Endothelial cell of umbilical vein (primary cell): ENCODE measurements at regions of chr1 and their contacts with region 1.

Region 1: GRCh38 chr1:29513357-29513756 is 277.0 kb downstream of the PTPRU start:
- DNase-seq: peak; percentile 45
- H3K4me3 ChIP-seq: no peak overlapping the region
- H3K27ac ChIP-seq: no peak overlapping the region
- H3K4me1 ChIP-seq: no peaks in the 10 kb centered on the region
- H3K27me3 ChIP-seq: no peaks in the 10 kb centered on the region
- CTCF ChIP-seq: peak; percentile 50 to 51
- POLR2A ChIP-seq: no peak

Region 2: GRCh38 chr1:29436181-29436785 is 77.1 kb before region 1 on chr1:
- CTCF ChIA-PET with region 1: no interaction called
- POLR2A ChIA-PET with region 1: no interaction called
- dilution Hi-C with region 1: no loop called
- intact Hi-C with region 1: no loop called
- DNase-seq: no peak
- H3K4me3 ChIP-seq: no peak overlapping the region
- H3K27ac ChIP-seq: no peak overlapping the region
- H3K4me1 ChIP-seq: no peaks in the 10 kb centered on the region
- H3K27me3 ChIP-seq: no peaks in the 10 kb centered on the region
- CTCF ChIP-seq: no peak
- POLR2A ChIP-seq: no peak

Region 3: DNA sequence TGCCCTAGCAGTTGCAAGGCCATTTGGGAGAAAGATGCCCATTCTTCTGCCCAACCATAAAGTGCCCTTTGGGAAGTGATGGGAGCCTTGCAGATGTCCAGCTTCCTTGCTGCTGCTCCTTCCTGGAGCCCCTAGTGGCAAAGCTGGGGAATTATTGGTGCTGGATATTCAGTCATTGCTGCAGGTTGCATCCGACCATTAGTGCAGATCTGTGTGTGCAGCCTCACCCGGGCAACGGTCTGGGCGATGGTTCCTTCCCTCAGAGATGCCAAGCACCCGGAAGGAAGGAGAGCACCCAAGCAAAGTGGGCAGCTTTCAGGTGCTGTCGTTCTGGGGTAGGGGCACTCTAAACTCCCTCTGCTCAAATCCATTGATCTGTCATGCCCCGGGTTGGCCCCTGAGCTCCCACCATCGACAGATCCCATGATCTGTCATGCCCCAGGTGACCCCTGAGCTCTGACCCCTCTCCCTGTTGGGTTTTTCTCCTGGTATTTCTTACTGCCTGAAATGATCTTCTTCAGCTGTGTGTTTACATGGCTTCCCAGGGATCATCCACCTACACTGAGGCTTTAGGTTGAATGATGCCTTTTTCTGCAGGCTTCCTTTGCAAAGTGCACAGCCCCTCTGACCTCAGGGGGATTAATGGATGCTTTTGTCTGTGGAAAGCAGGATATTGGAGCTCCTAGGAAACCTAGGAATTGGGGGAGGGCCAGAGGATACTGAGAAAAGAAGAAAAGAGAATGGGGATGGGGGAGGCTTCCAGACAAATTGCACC is 190.4 kb after region 1 on chr1:
- CTCF ChIA-PET with region 1: interaction called, 4 read pairs
- POLR2A ChIA-PET with region 1: no interaction called
- dilution Hi-C with region 1: no loop called
- intact Hi-C with region 1: loop called (anchors 1 kb)
- DNase-seq: peak; percentile 39
- H3K4me3 ChIP-seq: no peak overlapping the region
- H3K27ac ChIP-seq: no peak overlapping the region
- H3K4me1 ChIP-seq: peaks cover 11% of the 10 kb centered on the region
- H3K27me3 ChIP-seq: peaks cover 10 to 16% of the 10 kb centered on the region in 2 experiments
- CTCF ChIP-seq: peak; percentile 68 to 75
- POLR2A ChIP-seq: no peak

Region 4: GRCh38 chr1:29708901-29709710 is 195.7 kb after region 1 on chr1:
- CTCF ChIA-PET with region 1: no interaction called
- POLR2A ChIA-PET with region 1: no interaction called
- dilution Hi-C with region 1: no loop called
- intact Hi-C with region 1: loop called (anchors 1 kb)
- DNase-seq: no peak
- H3K4me3 ChIP-seq: no peak overlapping the region
- H3K27ac ChIP-seq: peak overlapping the region; percentile 95
- H3K4me1 ChIP-seq: peaks cover 48% of the 10 kb centered on the region
- H3K27me3 ChIP-seq: peaks cover 10 to 12% of the 10 kb centered on the region in 2 experiments
- CTCF ChIP-seq: no peak
- POLR2A ChIP-seq: peak; percentile 60

Region 5: DNA sequence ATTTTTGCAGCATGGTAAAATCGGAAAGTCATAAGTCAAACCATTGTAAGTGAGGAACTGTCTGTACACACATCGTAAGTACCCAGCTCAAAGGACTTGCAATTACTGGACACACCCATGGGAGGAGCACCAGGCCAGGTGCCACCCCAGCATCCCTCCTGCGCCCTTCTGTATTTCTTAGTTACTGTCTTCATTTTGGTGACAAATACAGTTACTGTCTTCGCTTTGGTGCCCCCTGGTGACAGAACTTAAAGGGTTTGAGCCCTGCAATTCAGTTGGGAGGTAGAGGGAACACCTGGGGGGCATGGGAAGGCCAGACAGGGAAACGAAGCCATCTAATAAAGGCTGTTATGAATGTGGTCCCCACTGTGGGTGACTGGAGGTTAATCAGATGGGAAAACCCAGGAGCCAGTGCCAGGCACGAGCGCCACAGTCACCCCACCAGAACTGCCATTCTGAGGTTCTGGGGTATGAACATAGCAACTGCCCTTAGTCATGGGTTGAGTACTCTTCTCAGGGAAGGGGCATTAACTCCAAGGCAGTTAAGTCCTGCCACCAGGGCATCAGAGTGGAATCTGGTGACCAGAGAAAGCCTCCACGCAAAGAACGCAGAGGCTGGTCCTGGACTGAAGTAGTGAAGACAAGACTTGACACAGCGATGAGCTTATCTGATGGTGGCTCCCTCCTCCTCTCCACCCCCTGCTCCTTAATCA is 335.8 kb after region 1 on chr1:
- CTCF ChIA-PET with region 1: interaction called, 3 read pairs
- POLR2A ChIA-PET with region 1: no interaction called
- dilution Hi-C with region 1: no loop called
- intact Hi-C with region 1: loop called (anchors 1 kb)
- DNase-seq: peak; percentile 21
- H3K4me3 ChIP-seq: no peak overlapping the region
- H3K27ac ChIP-seq: no peak overlapping the region
- H3K4me1 ChIP-seq: no peaks in the 10 kb centered on the region
- H3K27me3 ChIP-seq: no peaks in the 10 kb centered on the region
- CTCF ChIP-seq: peak; percentile 23 to 34
- POLR2A ChIP-seq: no peak

Region 6: DNA sequence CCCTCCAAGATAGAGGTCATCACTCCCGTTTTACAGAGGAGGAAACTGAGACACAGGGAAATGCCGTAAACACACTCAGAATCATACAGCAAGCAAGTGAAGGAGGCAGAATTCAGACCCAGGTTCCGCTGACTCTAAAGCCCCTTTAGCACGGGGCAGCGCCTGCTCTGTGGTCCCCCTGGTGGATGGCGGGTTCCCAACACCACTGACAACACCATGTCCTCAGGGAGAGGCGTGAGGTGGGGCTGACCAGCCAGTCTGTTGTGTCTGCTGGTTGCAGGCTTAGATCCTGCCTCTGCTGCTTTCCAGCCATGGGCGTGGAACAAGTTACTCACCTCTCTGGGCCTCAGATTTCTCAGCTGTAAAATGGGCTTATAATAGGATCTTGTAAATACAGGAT is 592.8 kb after region 1 on chr1:
- CTCF ChIA-PET with region 1: no interaction called
- POLR2A ChIA-PET with region 1: no interaction called
- dilution Hi-C with region 1: no loop called
- intact Hi-C with region 1: loop called (anchors 1 kb)
- DNase-seq: peak; percentile 14
- H3K4me3 ChIP-seq: no peak overlapping the region
- H3K27ac ChIP-seq: no peak overlapping the region
- H3K4me1 ChIP-seq: no peaks in the 10 kb centered on the region
- H3K27me3 ChIP-seq: peaks cover 0 to 1% of the 10 kb centered on the region in 2 experiments
- CTCF ChIP-seq: peak; percentile 42 to 66
- POLR2A ChIP-seq: no peak

Region 7: DNA sequence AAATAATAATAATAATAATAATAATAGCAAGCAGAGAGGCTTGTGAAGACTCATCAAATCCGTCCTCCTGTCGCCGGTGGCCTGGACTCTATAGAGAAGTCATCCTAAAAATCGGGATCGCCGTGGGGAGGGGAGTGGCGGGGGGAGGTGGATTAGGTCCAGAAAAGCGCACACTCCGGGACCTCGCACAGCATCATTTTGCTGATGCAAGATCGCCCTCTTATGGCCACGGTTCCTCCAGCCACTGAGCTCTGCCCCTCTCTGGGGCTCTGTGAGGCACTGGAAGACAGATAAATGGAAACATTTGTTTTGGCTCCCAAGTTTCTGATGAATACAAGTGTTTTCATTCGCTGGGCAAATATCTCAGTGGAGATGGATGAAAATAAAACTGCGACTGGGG is 598.1 kb after region 1 on chr1:
- CTCF ChIA-PET with region 1: no interaction called
- POLR2A ChIA-PET with region 1: no interaction called
- dilution Hi-C with region 1: no loop called
- intact Hi-C with region 1: loop called (anchors 1 kb)
- DNase-seq: peak; percentile 18
- H3K4me3 ChIP-seq: no peak overlapping the region
- H3K27ac ChIP-seq: no peak overlapping the region
- H3K4me1 ChIP-seq: no peaks in the 10 kb centered on the region
- H3K27me3 ChIP-seq: peaks cover 0 to 1% of the 10 kb centered on the region in 2 experiments
- CTCF ChIP-seq: peak; percentile 53 to 56
- POLR2A ChIP-seq: no peak

Region 8: GRCh38 chr1:30707412-30708360 is 1194.3 kb after region 1 on chr1:
- CTCF ChIA-PET with region 1: no interaction called
- POLR2A ChIA-PET with region 1: no interaction called
- dilution Hi-C with region 1: no loop called
- intact Hi-C with region 1: loop called (anchors 1 kb)
- DNase-seq: peak; percentile 50
- H3K4me3 ChIP-seq: no peak overlapping the region
- H3K27ac ChIP-seq: no peak overlapping the region
- H3K4me1 ChIP-seq: no peaks in the 10 kb centered on the region
- H3K27me3 ChIP-seq: peaks cover 0 to 3% of the 10 kb centered on the region in 2 experiments
- CTCF ChIP-seq: peak; percentile 84 to 88
- POLR2A ChIP-seq: no peak